ENCODE measurements at regions of chr20 and their contacts with region 1.

Region 1: GRCh38 chr20:62010551-62011402 is 54.9 kb downstream of the TAF4 start:
- DNase-seq: peak; percentile 44 to 68 (median 61)
- H3K4me3 ChIP-seq: no peak overlapping the region
- H3K27ac ChIP-seq: no peak overlapping the region
- H3K4me1 ChIP-seq: no peaks in the 10 kb centered on the region
- H3K27me3 ChIP-seq: no peaks in the 10 kb centered on the region
- CTCF ChIP-seq: peak; percentile 41 to 80 (median 73)
- POLR2A ChIP-seq: no peak

Region 2: GRCh38 chr20:61628901-61629601 is 381.7 kb before region 1 on chr20:
- intact Hi-C with region 1: no loop called
- DNase-seq: no peak
- H3K4me3 ChIP-seq: no peak overlapping the region
- H3K27ac ChIP-seq: no peak overlapping the region
- H3K4me1 ChIP-seq: no peaks in the 10 kb centered on the region
- H3K27me3 ChIP-seq: no peaks in the 10 kb centered on the region
- CTCF ChIP-seq: no peak
- POLR2A ChIP-seq: no peak

Region 3: GRCh38 chr20:62136283-62137091 is 125.7 kb after region 1 on chr20:
- intact Hi-C with region 1: loop called (anchors 5 kb)
- DNase-seq: peak; percentile 52 to 87 (median 76)
- H3K4me3 ChIP-seq: no peak overlapping the region
- H3K27ac ChIP-seq: peak overlapping the region in 3 of 5 donors; percentile 35 to 89 (median 66)
- H3K4me1 ChIP-seq: peaks cover 23 to 52% of the 10 kb centered on the region in 2 donors
- H3K27me3 ChIP-seq: no peaks in the 10 kb centered on the region
- CTCF ChIP-seq: peak; percentile 40 to 76 (median 70)
- POLR2A ChIP-seq: no peak

Region 4: DNA sequence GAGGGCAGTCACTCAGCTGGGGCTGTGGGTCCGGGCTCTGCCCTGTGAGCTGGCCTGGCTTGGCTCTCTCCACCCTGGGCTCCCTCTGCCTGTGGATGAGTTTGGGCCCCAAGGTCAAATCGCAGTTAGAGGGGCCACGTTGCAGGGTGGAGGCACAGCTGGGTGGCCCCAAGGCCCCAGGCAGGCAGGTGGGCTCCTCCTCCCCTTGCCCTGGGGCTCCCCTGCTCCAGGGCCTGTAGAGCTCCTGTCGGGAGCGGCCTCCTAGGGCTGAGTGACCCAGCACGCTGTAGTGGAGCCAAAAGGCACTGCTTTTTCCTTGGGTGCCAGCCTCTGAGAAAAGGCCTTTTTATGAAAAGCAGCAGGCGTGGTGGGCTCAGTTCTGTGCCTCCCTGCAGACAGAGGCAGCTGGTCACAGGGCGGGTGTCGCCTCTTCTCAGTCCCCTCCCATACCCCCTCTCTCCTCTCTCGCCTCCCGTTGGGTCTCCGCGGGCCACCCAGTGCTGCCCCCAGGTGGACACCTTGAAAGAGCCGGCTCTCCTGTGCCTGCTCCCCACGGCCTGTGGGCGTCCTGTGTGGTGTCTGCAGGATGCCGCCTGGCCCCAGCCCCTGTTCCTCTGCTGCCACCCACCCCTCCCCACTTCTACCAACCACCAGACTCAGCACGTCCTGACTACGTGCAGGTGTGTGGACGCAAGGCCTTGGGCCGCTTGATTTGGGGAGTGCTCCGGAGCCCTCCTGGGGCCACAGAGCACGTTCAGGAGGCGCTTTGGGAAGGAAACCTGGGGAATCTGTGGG is 146.0 kb after region 1 on chr20:
- intact Hi-C with region 1: loop called in 1 of 2 experiments (anchors 5 kb)
- DNase-seq: peak; percentile 63 to 80 (median 78)
- H3K4me3 ChIP-seq: no peak overlapping the region
- H3K27ac ChIP-seq: peak overlapping the region in 2 of 5 donors; percentile 13 to 22
- H3K4me1 ChIP-seq: peaks cover 7 to 12% of the 10 kb centered on the region in 2 donors
- H3K27me3 ChIP-seq: no peaks in the 10 kb centered on the region
- CTCF ChIP-seq: peak; percentile 65 to 74 (median 72)
- POLR2A ChIP-seq: no peak

Region 5: DNA sequence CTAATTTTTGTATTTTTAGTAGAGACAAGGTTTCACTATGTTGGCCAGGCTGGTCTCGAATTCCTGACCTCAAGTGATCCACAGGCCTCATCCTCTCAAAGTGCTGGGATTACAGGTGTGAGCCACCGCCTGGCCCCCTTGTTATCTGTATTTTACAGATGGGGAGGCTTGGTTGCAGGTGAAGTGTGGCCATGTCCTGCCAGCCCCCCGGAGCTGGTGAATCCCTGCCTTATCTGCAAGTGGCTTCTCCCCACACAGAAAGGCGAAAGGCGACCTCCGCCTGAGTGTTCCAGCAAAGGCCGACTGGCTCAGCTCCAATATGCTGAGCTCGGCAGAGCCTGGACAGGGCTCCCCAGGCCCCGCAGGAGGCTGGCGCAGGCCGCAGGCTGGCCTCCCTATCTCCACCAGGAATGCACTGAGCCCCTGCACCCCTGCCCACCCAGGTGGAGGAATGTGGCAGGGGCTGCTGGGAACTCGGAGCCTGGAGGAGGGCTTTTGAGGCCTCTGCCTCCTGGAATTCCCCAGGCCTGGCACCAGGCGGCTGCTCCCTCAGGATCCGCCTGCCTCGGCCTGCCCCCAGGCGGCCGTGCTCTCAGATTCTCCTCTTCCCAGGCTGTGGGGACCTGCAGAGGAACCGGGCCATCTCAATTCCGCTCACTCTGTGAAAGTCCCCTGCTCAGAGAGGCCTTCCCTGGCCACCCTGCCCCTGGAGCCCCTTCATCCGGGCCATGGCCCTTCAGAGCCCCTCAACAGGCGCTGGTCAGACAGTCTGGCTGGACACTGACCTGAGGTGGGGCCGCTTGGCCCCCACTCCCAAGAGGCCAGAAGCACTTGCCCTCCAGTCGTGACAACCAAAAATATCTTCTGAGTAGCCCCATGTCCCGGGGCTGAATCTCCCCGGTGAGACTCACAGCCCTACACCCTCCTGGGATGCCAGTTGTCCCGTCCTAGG is 365.6 kb after region 1 on chr20:
- intact Hi-C with region 1: loop called in 1 of 2 experiments (anchors 10 kb)
- DNase-seq: peak in 5 of 7 donors; percentile 63 to 77 (median 73)
- H3K4me3 ChIP-seq: no peak overlapping the region
- H3K27ac ChIP-seq: peak overlapping the region in 3 of 5 donors; percentile 28 to 38 (median 37)
- H3K4me1 ChIP-seq: peaks cover 15 to 20% of the 10 kb centered on the region in 2 donors
- H3K27me3 ChIP-seq: no peaks in the 10 kb centered on the region
- CTCF ChIP-seq: peak; percentile 29 to 79 (median 65)
- POLR2A ChIP-seq: no peak

Measured in adrenal gland (tissue), 19 donors.